Activated naive CD8-positive, alpha-beta T cell treated with anti-CD3 and anti-CD28 coated beads, Interleukin-2, amount 10 ng/mL, durations not matched to agents 7 days and 5 days (primary cell): ENCODE measurements at regions of chr5 and their contacts with region 1.

Region 1: GRCh38 chr5:109409844-109410388 is at the start of gene PJA2:
- DNase-seq: peak; percentile 98
- ATAC-seq: peak; percentile 88
- H3K4me3 Mint-ChIP-seq: peak within 1 kb of the TSS; percentile 95
- H3K27ac Mint-ChIP-seq: peak within 1 kb of the TSS; percentile 100
- H3K4me1 Mint-ChIP-seq: peaks cover 27% of the 10 kb centered on the region
- H3K27me3 Mint-ChIP-seq: no peaks in the 10 kb centered on the region
- total RNA-seq, gene PJA2: 72.2 to 75.6 TPM

Region 2: DNA sequence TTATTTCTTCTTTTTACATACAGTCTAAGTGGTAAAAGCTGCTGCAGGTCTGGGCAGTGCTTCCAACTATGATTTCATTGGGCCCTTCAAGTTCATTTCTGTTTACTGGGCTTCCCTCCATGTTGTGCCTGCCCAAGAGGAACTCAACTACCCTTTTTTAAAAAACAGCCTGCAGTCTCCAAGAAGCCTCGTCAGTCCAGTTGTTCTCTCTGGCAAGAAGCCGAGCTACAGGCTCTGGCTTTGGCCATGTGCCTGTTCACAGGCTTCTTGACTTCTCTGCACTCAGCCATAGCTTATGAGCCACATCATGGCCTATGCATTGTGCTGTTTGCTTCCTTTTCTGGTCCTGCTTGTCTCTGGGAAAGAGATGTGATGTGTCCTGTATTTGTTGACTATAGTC is 119.6 kb after region 1 on chr5:
- POLR2A ChIA-PET with region 1: no interaction called
- DNase-seq: no peak
- ATAC-seq: no peak
- H3K4me3 Mint-ChIP-seq: no peak overlapping the region
- H3K27ac Mint-ChIP-seq: no peak overlapping the region
- H3K4me1 Mint-ChIP-seq: no peaks in the 10 kb centered on the region
- H3K27me3 Mint-ChIP-seq: peaks cover 3% of the 10 kb centered on the region

Region 3: DNA sequence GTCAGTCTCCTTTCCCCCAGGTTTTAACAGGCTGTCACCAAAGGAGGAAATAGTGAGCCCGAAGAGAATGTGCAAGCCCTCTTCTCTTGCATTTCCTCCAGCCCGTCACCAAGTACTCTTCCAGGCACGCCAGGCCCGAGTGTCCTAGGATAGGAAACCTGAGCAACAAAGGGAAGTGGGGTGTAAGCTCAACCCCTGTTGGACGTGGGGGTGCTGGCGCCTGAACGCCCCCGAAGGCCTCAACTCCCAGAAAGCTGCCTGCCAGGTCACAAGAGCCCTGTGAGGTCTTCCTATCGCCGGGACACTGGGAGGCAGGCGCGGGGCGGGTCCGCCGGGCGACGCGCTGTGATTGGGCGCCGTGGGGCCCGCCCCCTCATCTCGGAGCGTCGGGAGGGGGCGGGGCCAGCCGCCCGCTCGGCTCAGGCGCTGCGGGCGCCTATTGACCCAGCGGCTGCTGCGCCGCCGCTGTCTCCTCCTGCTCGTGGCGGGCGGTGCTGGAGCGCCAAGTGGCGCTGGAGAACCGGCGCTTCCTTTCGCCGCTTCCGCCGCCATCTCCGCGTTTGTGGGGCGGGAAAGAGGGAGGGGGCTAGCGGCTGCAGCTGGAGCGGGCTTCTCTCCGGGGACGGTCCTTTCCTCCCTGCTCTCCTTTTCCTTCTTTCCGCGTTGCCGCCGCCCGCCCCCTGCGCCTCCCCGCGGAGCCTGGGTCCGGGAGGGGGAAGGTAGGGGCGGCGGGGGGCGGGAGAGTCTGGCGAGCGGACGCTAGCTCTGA is 279.2 kb after region 1 on chr5:
- POLR2A ChIA-PET with region 1: interaction called, 10 read pairs
- DNase-seq: peak; percentile 87
- ATAC-seq: peak; percentile 78
- H3K4me3 Mint-ChIP-seq: peak overlapping the region; percentile 89
- H3K27ac Mint-ChIP-seq: peak overlapping the region; percentile 90
- H3K4me1 Mint-ChIP-seq: peaks cover 32% of the 10 kb centered on the region
- H3K27me3 Mint-ChIP-seq: no peaks in the 10 kb centered on the region